IMR-90 (cell line): ENCODE measurements at regions of chr14 and their contacts with region 1.

Region 1: DNA sequence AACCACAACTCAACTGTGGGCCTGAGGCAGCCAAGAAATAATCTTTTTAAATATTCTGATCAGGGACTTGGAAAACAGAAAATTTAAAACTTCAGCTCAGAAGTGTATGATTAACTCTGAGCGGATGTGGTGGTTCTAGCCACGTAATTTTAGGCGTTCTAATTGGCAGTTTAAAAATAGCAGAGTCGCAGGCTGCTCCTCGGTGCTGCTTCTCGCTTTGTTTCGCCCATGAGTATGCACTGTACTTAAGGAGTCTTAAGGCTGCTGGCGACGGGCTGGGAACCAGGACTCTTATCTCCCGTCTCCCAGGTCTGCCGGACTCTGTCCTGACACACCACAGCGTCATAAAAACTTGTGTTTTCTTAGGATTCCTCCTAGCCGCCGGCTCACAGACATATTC is 113.4 kb upstream of the PELI2 start:
- DNase-seq: peak; percentile 75
- ATAC-seq: peak; percentile 84
- H3K4me3 ChIP-seq: peak overlapping the region; percentile 24; the same call in 1 of the 2 replicates
- H3K27ac ChIP-seq: no peak overlapping the region
- H3K4me1 ChIP-seq: peaks cover 8% of the 10 kb centered on the region
- H3K27me3 ChIP-seq: no peaks in the 10 kb centered on the region
- CTCF ChIP-seq: no peak
- POLR2A ChIP-seq: peak; percentile 82
- RAD21 ChIP-seq: no peak

Region 2: GRCh38 chr14:55731881-55732498 is 272.8 kb before region 1 on chr14:
- CTCF ChIA-PET with region 1: no interaction called
- POLR2A ChIA-PET with region 1: no interaction called
- dilution Hi-C with region 1: no loop called
- in situ Hi-C with region 1: no loop called
- intact Hi-C with region 1: loop called (anchors 10 kb)
- DNase-seq: peak; percentile 24
- ATAC-seq: peak; percentile 66
- H3K4me3 ChIP-seq: no peak overlapping the region
- H3K27ac ChIP-seq: no peak overlapping the region
- H3K4me1 ChIP-seq: no peaks in the 10 kb centered on the region
- H3K27me3 ChIP-seq: no peaks in the 10 kb centered on the region
- CTCF ChIP-seq: peak; percentile 64
- POLR2A ChIP-seq: no peak
- RAD21 ChIP-seq: peak; percentile 72

Region 3: GRCh38 chr14:55893705-55894104 is 111.1 kb before region 1 on chr14:
- CTCF ChIA-PET with region 1: no interaction called
- POLR2A ChIA-PET with region 1: no interaction called
- dilution Hi-C with region 1: no loop called
- in situ Hi-C with region 1: no loop called
- intact Hi-C with region 1: no loop called
- DNase-seq: no peak
- ATAC-seq: no peak; the same call in 1 of the 2 replicates
- H3K4me3 ChIP-seq: no peak overlapping the region
- H3K27ac ChIP-seq: no peak overlapping the region
- H3K4me1 ChIP-seq: no peaks in the 10 kb centered on the region
- H3K27me3 ChIP-seq: peaks cover 19% of the 10 kb centered on the region
- CTCF ChIP-seq: no peak
- POLR2A ChIP-seq: no peak
- RAD21 ChIP-seq: no peak

Region 4: DNA sequence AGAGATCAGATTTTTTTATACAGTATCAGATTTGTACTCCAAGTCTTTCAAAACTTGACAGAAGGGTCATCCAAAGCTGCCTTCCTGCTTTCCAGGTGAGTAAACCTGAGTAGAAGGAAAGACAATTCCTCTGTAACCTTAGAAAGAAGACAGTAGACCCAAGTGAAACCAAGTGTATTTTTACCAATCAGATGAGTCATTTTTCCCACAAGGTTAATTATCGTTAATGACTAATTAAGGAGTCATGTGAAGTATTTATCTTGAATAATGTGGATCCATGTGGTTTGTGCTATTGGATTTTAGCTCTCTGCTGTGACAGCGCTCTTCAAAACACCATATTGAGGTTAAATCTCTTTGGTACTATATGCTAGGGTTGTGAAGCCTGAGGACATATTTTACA is 39.4 kb after region 1 on chr14:
- CTCF ChIA-PET with region 1: no interaction called
- POLR2A ChIA-PET with region 1: no interaction called
- dilution Hi-C with region 1: no loop called
- in situ Hi-C with region 1: no loop called
- intact Hi-C with region 1: no loop called
- DNase-seq: no peak
- ATAC-seq: no peak
- H3K4me3 ChIP-seq: no peak overlapping the region
- H3K27ac ChIP-seq: no peak overlapping the region
- H3K4me1 ChIP-seq: no peaks in the 10 kb centered on the region
- H3K27me3 ChIP-seq: peaks cover 12% of the 10 kb centered on the region
- CTCF ChIP-seq: no peak
- POLR2A ChIP-seq: no peak
- RAD21 ChIP-seq: no peak

Region 5: DNA sequence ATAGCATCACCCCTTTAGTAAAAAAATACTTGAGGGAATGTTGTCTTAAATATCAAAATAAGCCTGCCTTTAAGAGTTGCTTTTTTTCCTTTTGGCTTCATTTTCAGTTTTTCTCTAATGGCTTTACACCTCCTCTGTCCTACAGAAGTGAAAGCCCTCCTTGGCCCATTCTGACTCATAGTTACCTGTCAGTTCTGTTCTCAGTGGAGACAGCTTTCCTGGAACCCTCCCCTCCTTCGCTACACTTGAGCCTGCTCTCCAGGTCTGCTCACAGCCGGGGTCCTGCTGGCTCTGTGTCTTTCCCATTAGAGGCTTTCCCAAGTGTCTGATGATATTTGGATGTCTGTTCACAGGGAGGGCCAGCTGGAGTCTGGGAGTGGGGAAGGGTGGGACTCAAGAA is 197.5 kb after region 1 on chr14:
- CTCF ChIA-PET with region 1: no interaction called
- POLR2A ChIA-PET with region 1: no interaction called
- dilution Hi-C with region 1: no loop called
- in situ Hi-C with region 1: no loop called
- intact Hi-C with region 1: no loop called
- DNase-seq: no peak
- ATAC-seq: no peak
- H3K4me3 ChIP-seq: no peak overlapping the region
- H3K27ac ChIP-seq: no peak overlapping the region
- H3K4me1 ChIP-seq: peaks cover 12% of the 10 kb centered on the region
- H3K27me3 ChIP-seq: no peaks in the 10 kb centered on the region
- CTCF ChIP-seq: no peak
- POLR2A ChIP-seq: no peak
- RAD21 ChIP-seq: no peak